CD4-positive, alpha-beta T cell (primary cell): ENCODE measurements at regions of chr10 and their contacts with region 1.

Region 1: GRCh38 chr10:118046395-118047156 is at the start of gene RAB11FIP2:
- DNase-seq: peak; percentile 91 to 98 (median 95)
- ATAC-seq: peak; percentile 93
- H3K4me3 ChIP-seq: peak within 1 kb of the TSS; percentile 79
- H3K4me3 Mint-ChIP-seq: peak within 1 kb of the TSS; percentile 94
- H3K27ac ChIP-seq: peak within 1 kb of the TSS in 1 of 2 donors; percentile 60
- H3K27ac Mint-ChIP-seq: peak within 1 kb of the TSS; percentile 79
- H3K4me1 ChIP-seq: peaks cover 13% of the 10 kb centered on the region
- H3K4me1 Mint-ChIP-seq: peaks cover 51% of the 10 kb centered on the region
- H3K27me3 ChIP-seq: no peaks in the 10 kb centered on the region
- H3K27me3 Mint-ChIP-seq: no peaks in the 10 kb centered on the region
- CTCF ChIP-seq: no peak
- total RNA-seq, gene RAB11FIP2: 35.6 to 37.7 TPM

Region 2: DNA sequence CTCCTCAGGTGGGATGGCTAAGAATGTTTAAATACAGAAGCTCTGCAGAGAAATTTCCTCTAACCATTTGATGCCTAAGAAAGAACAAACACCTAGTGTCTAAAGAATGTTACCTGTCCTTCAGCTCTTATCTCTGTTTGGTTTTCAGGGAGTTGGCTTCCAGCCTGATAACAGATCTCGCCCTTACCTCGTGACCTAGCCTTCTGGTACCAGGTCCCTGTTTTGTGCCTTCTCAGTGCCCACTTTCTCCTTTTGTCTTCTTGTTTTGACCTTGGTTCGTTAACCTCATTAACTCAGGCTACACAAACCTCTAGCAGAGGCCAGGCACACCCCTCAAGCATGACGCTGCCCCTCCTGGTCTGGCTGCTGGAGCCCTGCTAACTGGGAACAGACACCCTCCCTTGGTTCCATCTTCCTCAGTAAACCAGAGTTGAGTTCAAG is 16.2 kb after region 1 on chr10:
- CTCF ChIA-PET with region 1: no interaction called
- POLR2A ChIA-PET with region 1: no interaction called
- intact Hi-C with region 1: no loop called
- DNase-seq: no peak
- ATAC-seq: no peak
- H3K4me3 ChIP-seq: no peak overlapping the region
- H3K4me3 Mint-ChIP-seq: no peak overlapping the region
- H3K27ac ChIP-seq: no peak overlapping the region
- H3K27ac Mint-ChIP-seq: no peak overlapping the region
- H3K4me1 ChIP-seq: no peaks in the 10 kb centered on the region
- H3K4me1 Mint-ChIP-seq: no peaks in the 10 kb centered on the region
- H3K27me3 ChIP-seq: peaks cover 4 to 8% of the 10 kb centered on the region in 2 experiments
- H3K27me3 Mint-ChIP-seq: peaks cover 43% of the 10 kb centered on the region
- CTCF ChIP-seq: no peak

Region 3: GRCh38 chr10:119892188-119893065 is 1845.9 kb after region 1 on chr10 and contains the start of gene SEC23IP:
- CTCF ChIA-PET with region 1: no interaction called
- POLR2A ChIA-PET with region 1: no interaction called
- intact Hi-C with region 1: loop called in 1 of 2 experiments (anchors 5 kb)
- DNase-seq: peak; percentile 82 to 94 (median 86)
- ATAC-seq: peak; percentile 99
- H3K4me3 ChIP-seq: peak within 1 kb of the TSS; percentile 98
- H3K4me3 Mint-ChIP-seq: peak within 1 kb of the TSS; percentile 95
- H3K27ac ChIP-seq: peak within 1 kb of the TSS; percentile 76 to 91
- H3K27ac Mint-ChIP-seq: peak within 1 kb of the TSS; percentile 95
- H3K4me1 ChIP-seq: peaks cover 27% of the 10 kb centered on the region
- H3K4me1 Mint-ChIP-seq: peaks cover 59% of the 10 kb centered on the region
- H3K27me3 ChIP-seq: no peaks in the 10 kb centered on the region
- H3K27me3 Mint-ChIP-seq: no peaks in the 10 kb centered on the region
- CTCF ChIP-seq: no peak
- total RNA-seq, gene SEC23IP: 18.1 to 21.1 TPM